ENCODE measurements at regions of chr10 and their contacts with region 1.

Region 1: GRCh38 chr10:29590915-29591650 is 43.7 kb downstream of the SVIL start:
- DNase-seq: no peak
- ATAC-seq: no peak
- H3K4me3 ChIP-seq: no peak overlapping the region
- H3K27ac ChIP-seq: no peak overlapping the region
- H3K4me1 ChIP-seq: no peaks in the 10 kb centered on the region
- H3K27me3 ChIP-seq: peaks cover 0 to 17% of the 10 kb centered on the region in 2 experiments; a peak in 2 of 5 replicates
- CTCF ChIP-seq: no peak; a peak in 1 of 6 replicates
- EP300 ChIP-seq: no peak
- POLR2A ChIP-seq: no peak
- RAD21 ChIP-seq: no peak

Region 2: DNA sequence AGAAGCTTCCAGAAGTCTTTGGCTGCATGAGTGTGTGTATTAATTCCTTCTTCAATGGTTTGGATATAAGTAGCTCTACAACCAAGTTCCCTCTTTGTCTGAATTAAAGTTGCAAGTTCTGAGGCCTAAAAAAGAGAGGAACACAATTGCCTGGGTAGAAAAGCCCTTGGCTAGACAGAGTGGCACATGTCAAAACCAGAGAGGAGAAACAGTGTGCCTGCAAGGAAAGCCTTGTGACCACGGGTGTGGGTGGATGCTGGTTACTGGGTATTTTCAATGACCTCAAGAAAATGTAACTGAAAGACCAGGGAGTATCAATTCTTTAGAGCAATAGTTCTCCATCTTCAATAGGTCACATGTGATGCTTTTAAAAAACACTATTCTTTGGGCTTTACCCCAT is 104.7 kb before region 1 on chr10:
- CTCF ChIA-PET with region 1: no interaction called
- POLR2A ChIA-PET with region 1: no interaction called
- in situ Hi-C with region 1: no loop called
- intact Hi-C with region 1: loop called (anchors 5 kb)
- DNase-seq: no peak
- ATAC-seq: no peak
- H3K4me3 ChIP-seq: no peak overlapping the region
- H3K27ac ChIP-seq: no peak overlapping the region
- H3K4me1 ChIP-seq: no peaks in the 10 kb centered on the region
- H3K27me3 ChIP-seq: peaks cover 5 to 32% of the 10 kb centered on the region in 2 experiments; a peak in 4 of 5 replicates
- CTCF ChIP-seq: no peak
- EP300 ChIP-seq: no peak
- POLR2A ChIP-seq: no peak
- RAD21 ChIP-seq: no peak

Region 3: GRCh38 chr10:30170824-30171223 is 579.7 kb after region 1 on chr10:
- CTCF ChIA-PET with region 1: no interaction called
- POLR2A ChIA-PET with region 1: no interaction called
- in situ Hi-C with region 1: no loop called
- intact Hi-C with region 1: no loop called
- DNase-seq: no peak
- ATAC-seq: no peak; the same call in 2 of the 3 replicates
- H3K4me3 ChIP-seq: no peak overlapping the region
- H3K27ac ChIP-seq: no peak overlapping the region
- H3K4me1 ChIP-seq: peaks cover 0 to 9% of the 10 kb centered on the region in 2 experiments; a peak in 2 of 5 replicates
- H3K27me3 ChIP-seq: peaks cover 0 to 12% of the 10 kb centered on the region in 2 experiments; a peak in 2 of 5 replicates
- CTCF ChIP-seq: no peak
- EP300 ChIP-seq: peak; percentile 20; the same call in 1 of the 2 replicates
- POLR2A ChIP-seq: no peak
- RAD21 ChIP-seq: no peak